GM12878 (cell line): ENCODE measurements at regions of chr11 and their contacts with region 1.

Region 1: DNA sequence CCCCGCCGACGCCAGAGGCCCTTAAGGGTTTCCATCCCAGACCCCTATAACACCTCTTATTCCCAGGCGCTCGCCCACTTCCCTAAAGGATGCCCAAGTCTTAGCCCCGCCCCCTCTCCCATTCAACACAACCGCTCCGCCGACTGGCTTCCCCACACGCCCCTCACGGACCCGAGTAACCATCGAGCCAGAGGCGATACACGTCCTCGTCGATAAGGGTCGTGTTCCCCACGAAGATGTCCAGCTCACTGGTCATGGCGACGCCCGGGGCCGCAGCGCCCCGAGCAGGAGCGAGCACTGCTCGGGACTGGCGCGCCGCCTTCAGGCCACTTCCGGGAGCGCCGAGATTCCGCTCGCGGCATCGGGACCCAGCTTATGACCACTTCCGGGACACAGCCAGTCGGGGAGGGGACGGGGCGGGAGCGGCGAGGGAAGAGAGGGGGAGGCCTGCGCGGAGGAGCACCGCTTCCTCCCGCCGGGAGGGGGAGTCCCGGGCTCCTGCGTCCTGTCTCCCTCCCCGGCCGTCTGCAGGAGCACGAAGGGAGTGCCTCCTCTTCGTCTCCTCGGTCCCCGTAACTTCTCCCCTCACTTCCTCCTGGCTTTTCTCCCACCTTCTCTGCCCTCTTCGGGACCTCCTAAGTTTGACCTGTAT is at the start of gene FIBP:
- DNase-seq: peak; percentile 83
- ATAC-seq: peak; percentile 69
- H3K4me3 ChIP-seq: peak within 1 kb of the TSS; percentile 90
- H3K27ac ChIP-seq: peak within 1 kb of the TSS; percentile 84
- H3K4me1 ChIP-seq: peaks cover 29% of the 10 kb centered on the region
- H3K27me3 ChIP-seq: no peaks in the 10 kb centered on the region
- CTCF ChIP-seq: peak; percentile 78 to 84 (median 80)
- EP300 ChIP-seq: peak in 1 of 2 experiments; percentile 46; a peak in 1 of 4 replicates
- POLR2A ChIP-seq: peak; percentile 96
- RAD21 ChIP-seq: peak; percentile 45
- polyA plus RNA-seq, gene FIBP: 65.1 to 80.7 TPM

Region 2: DNA sequence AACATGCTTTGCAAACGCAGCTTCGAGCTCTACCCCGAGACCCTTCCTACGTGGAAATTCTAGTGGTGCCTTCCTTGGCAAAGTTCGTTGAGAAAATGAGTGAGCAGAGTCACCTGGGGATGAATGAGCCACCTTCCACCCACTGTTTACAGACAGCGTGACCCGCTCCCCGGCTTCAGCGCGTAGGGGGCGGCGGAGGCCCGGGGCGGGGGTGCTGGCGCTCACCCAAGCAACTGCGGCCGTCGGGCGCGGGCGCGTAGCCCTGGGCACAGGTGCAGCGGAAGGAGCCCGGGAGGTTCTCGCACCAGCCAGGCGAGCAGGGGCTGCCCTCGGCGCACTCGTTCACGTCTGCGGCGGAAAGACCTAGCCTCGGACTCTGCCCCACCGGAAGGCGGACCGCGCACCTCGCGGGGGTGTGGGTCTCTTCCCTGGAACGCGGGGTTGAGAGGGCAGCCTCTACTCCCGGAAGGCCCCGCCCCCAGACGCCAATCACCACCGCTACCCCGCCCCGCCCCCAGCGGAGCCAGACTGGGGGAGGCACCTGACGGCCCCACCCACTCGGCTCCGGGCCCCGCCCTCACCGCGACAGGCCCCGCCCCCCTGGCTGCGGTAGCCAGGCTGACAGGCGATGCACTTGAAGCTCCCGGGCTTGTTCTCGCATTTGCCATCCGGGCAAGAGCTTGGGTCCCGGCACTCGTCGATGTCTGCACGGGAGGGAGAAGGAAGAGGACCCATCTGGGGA is 341.9 kb before region 1 on chr11:
- CTCF ChIA-PET with region 1: no interaction called
- POLR2A ChIA-PET with region 1: no interaction called
- RAD21 ChIA-PET with region 1: no interaction called
- SMC1A ChIA-PET with region 1: no interaction called
- in situ Hi-C with region 1: no loop called
- intact Hi-C with region 1: no loop called
- DNase-seq: no peak
- ATAC-seq: peak; percentile 93
- H3K4me3 ChIP-seq: peak overlapping the region; percentile 68
- H3K27ac ChIP-seq: no peak overlapping the region
- H3K4me1 ChIP-seq: peaks cover 23% of the 10 kb centered on the region
- H3K27me3 ChIP-seq: no peaks in the 10 kb centered on the region
- CTCF ChIP-seq: no peak
- EP300 ChIP-seq: no peak
- POLR2A ChIP-seq: peak; percentile 69
- RAD21 ChIP-seq: no peak

Region 3: GRCh38 chr11:65711785-65712632 is 176.3 kb before region 1 on chr11 and contains the start of gene KAT5:
- CTCF ChIA-PET with region 1: interaction called, 22 read pairs
- POLR2A ChIA-PET with region 1: interaction called, 9 read pairs
- RAD21 ChIA-PET with region 1: interaction called, 21 read pairs
- SMC1A ChIA-PET with region 1: interaction called, 9 read pairs
- in situ Hi-C with region 1: no loop called
- intact Hi-C with region 1: no loop called
- DNase-seq: peak; percentile 94
- ATAC-seq: peak; percentile 89
- H3K4me3 ChIP-seq: peak within 1 kb of the TSS; percentile 85
- H3K27ac ChIP-seq: peak within 1 kb of the TSS; percentile 99
- H3K4me1 ChIP-seq: peaks cover 8% of the 10 kb centered on the region
- H3K27me3 ChIP-seq: no peaks in the 10 kb centered on the region
- CTCF ChIP-seq: peak; percentile 99 to 100 (median 100); a peak in 5 of 6 replicates
- EP300 ChIP-seq: peak in 1 of 2 experiments; percentile 16; a peak in 1 of 4 replicates
- POLR2A ChIP-seq: peak; percentile 92
- RAD21 ChIP-seq: peak; percentile 90
- polyA plus RNA-seq, gene KAT5: 3.4 to 10.2 TPM

Region 4: DNA sequence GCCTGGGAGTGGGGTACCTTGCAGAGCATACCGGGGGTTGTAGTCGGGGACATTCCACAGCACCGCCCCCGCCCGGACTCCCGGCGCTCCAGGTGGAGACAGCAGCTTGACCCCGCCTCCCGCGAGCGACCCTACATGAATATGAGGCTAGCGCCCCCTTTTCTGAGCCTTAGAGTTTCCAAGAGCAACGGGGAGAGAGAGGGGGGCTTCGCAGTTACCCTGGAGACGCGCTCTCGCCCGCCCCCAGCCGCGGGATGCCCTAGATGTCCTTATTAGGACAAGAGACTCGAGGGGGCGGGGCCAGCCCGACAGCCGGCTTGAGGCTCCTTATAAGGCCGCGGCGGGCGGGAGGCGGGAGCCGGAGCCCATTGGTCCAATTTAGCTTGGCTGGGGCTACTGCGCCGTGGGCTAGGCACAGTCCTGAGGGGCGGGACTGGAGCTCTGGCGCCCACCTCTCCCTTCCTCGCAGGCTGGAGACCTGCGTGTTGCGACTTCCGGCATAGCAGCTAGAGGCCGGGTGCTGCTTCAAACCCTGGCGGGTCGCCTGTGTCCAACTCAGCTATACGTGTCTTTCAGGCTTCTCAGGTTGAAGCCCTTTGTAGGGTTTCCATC is 29.0 kb before region 1 on chr11:
- CTCF ChIA-PET with region 1: interaction called, 146 read pairs
- POLR2A ChIA-PET with region 1: interaction called, 155 read pairs
- RAD21 ChIA-PET with region 1: interaction called, 76 read pairs
- SMC1A ChIA-PET with region 1: interaction called, 52 read pairs
- in situ Hi-C with region 1: no loop called
- intact Hi-C with region 1: loop called (anchors 2 kb)
- DNase-seq: peak; percentile 90
- ATAC-seq: peak; percentile 78
- H3K4me3 ChIP-seq: peak overlapping the region; percentile 85
- H3K27ac ChIP-seq: peak overlapping the region; percentile 100
- H3K4me1 ChIP-seq: peaks cover 25% of the 10 kb centered on the region
- H3K27me3 ChIP-seq: no peaks in the 10 kb centered on the region
- CTCF ChIP-seq: no peak
- EP300 ChIP-seq: no peak
- POLR2A ChIP-seq: peak; percentile 87
- RAD21 ChIP-seq: no peak

Region 5: GRCh38 chr11:65919146-65920033 is 31.1 kb after region 1 on chr11 and contains the start of gene DRAP1:
- CTCF ChIA-PET with region 1: interaction called, 10 read pairs
- POLR2A ChIA-PET with region 1: interaction called, 17 read pairs
- RAD21 ChIA-PET with region 1: interaction called, 5 read pairs
- SMC1A ChIA-PET with region 1: interaction called, 5 read pairs
- in situ Hi-C with region 1: no loop called
- intact Hi-C with region 1: no loop called
- DNase-seq: peak; percentile 64
- ATAC-seq: peak; percentile 95
- H3K4me3 ChIP-seq: peak within 1 kb of the TSS; percentile 82
- H3K27ac ChIP-seq: peak within 1 kb of the TSS; percentile 91
- H3K4me1 ChIP-seq: peaks cover 22% of the 10 kb centered on the region
- H3K27me3 ChIP-seq: no peaks in the 10 kb centered on the region
- CTCF ChIP-seq: no peak; a peak in 1 of 6 replicates
- EP300 ChIP-seq: peak in 1 of 2 experiments; percentile 55; a peak in 1 of 4 replicates
- POLR2A ChIP-seq: peak; percentile 55
- RAD21 ChIP-seq: no peak
- polyA plus RNA-seq, gene DRAP1: 9.4 to 35.8 TPM

Region 6: DNA sequence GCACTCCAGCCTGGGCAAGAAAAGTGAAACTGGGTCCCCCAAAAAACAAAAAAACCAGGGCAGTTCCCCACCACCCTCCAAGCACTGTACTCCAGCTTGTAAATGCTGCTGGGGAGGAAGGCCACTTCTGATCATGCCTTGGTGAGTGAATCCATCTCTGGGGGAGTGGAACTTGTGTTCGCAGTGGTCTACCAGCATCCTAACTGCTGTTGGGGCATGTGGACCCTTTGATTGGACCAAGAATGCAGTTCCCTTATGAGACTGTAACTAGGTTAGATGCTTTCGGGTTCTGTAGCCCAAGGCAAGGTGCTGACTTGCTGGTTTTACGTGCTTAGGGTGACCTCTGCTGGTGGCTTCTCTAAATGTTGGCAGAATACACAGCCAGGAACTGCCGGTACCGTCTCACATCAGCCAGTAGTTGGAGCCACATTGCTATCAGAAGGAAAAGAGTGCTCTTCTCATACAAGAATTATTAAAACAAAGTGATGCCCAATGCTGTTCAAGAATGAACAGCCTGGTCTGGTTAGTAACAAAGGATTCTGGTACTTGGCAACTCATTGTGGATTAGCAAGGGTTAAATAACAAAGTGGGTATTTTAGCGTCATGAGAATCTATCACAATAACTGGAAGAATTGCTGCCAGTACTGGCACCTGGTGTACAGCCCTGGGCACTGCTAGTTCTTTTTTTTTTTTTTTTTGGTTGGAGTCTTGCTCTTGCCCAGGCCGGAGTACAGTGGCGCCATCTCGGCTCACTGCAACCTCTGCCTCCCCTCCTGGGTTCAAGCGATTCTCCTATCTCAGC is 100.7 kb after region 1 on chr11:
- CTCF ChIA-PET with region 1: interaction called, 167 read pairs
- POLR2A ChIA-PET with region 1: interaction called, 5 read pairs
- RAD21 ChIA-PET with region 1: interaction called, 40 read pairs
- SMC1A ChIA-PET with region 1: interaction called, 28 read pairs
- in situ Hi-C with region 1: loop called (anchors 5 kb)
- intact Hi-C with region 1: loop called (anchors 1 kb)
- DNase-seq: peak; percentile 90
- ATAC-seq: peak; percentile 100
- H3K4me3 ChIP-seq: no peak overlapping the region
- H3K27ac ChIP-seq: no peak overlapping the region
- H3K4me1 ChIP-seq: no peaks in the 10 kb centered on the region
- H3K27me3 ChIP-seq: no peaks in the 10 kb centered on the region
- CTCF ChIP-seq: peak; percentile 92 to 100 (median 99); a peak in 5 of 6 replicates
- EP300 ChIP-seq: no peak
- POLR2A ChIP-seq: no peak; the same call in 1 of the 2 replicates
- RAD21 ChIP-seq: peak; percentile 94